ENCODE measurements at regions of chr2 and their contacts with region 1.

Region 1: DNA sequence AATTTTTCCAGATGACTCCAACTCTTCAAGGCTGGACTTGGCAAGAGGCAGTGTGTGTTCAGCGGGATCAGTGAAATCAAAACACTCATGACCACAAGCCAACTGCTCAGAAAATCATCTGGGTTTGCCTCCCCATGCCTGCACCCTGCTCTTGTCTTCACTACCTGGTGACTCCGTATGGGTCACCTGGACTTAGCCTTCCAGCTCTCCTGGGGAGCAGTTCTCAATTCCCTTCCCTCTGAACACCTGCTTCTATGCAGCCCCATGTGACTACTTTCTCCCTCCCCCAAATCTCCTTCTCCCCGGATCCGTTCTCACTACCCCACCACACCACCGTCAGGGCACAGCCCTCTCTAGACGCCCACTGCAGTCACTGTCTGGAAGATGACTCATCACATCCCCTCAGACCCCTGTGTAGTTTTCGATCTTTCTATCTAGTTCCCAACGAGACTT is 130.2 kb upstream of the ID2 start:
- DNase-seq: no peak
- ATAC-seq: peak; percentile 74
- H3K4me3 Mint-ChIP-seq: peak overlapping the region; percentile 63
- H3K27ac Mint-ChIP-seq: peak overlapping the region; percentile 5
- H3K4me1 Mint-ChIP-seq: peaks cover 21% of the 10 kb centered on the region
- H3K27me3 Mint-ChIP-seq: peaks cover 14% of the 10 kb centered on the region
- CTCF ChIP-seq: no peak

Region 2: GRCh38 chr2:8574144-8575037 is 22.7 kb after region 1 on chr2:
- CTCF ChIA-PET with region 1: no interaction called
- POLR2A ChIA-PET with region 1: interaction called, 3 read pairs
- intact Hi-C with region 1: loop called (anchors 1 kb)
- DNase-seq: no peak
- ATAC-seq: peak; percentile 21
- H3K4me3 Mint-ChIP-seq: peak overlapping the region; percentile 63
- H3K27ac Mint-ChIP-seq: peak overlapping the region; percentile 24
- H3K4me1 Mint-ChIP-seq: peaks cover 67% of the 10 kb centered on the region
- H3K27me3 Mint-ChIP-seq: peaks cover 50% of the 10 kb centered on the region
- CTCF ChIP-seq: no peak

Region 3: GRCh38 chr2:8882094-8882493 is 330.4 kb after region 1 on chr2:
- CTCF ChIA-PET with region 1: no interaction called
- POLR2A ChIA-PET with region 1: no interaction called
- intact Hi-C with region 1: no loop called
- DNase-seq: no peak
- ATAC-seq: no peak
- H3K4me3 Mint-ChIP-seq: no peak overlapping the region
- H3K27ac Mint-ChIP-seq: no peak overlapping the region
- H3K4me1 Mint-ChIP-seq: no peaks in the 10 kb centered on the region
- H3K27me3 Mint-ChIP-seq: no peaks in the 10 kb centered on the region
- CTCF ChIP-seq: no peak